ENCODE measurements at regions of chr9 and their contacts with region 1.

Region 1: DNA sequence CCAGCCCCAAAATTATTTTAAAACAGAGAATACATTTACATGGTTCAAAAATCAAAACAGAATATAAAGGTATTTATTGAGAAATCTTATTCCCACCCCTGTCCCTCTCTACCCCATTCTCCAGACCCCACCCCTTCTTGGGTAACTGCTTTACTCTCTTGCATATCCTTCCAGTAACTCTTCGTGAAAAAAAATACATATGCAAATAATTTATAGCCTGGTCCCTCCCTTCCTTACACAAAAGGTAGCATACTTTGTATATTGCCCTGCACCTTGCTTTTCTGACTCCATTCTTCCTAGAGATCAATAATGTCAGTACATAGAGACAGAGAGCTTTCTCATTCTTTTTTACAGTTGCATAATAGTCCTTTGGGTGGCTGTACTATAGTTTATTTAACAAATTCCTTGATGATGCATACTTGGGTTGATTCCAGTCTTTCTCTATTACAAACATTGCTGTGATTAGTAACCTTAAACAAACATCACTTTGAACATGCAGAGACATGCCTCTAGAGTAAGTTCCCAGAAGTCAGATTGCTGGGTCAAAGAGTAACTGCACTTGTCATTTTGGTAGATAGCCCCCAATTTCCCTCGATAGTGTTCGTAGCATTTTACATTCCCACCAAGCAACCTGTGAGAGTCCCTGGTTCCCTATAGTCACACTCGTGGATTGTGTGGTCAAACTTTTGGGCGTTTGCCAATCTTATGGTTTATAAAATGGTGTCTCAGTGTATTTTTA is 47.8 kb downstream of the STOM start:
- H3K4me3 ChIP-seq: no peak overlapping the region
- H3K27ac ChIP-seq: no peak overlapping the region
- H3K4me1 ChIP-seq: no peaks in the 10 kb centered on the region
- CTCF ChIP-seq: no peak

Region 2: DNA sequence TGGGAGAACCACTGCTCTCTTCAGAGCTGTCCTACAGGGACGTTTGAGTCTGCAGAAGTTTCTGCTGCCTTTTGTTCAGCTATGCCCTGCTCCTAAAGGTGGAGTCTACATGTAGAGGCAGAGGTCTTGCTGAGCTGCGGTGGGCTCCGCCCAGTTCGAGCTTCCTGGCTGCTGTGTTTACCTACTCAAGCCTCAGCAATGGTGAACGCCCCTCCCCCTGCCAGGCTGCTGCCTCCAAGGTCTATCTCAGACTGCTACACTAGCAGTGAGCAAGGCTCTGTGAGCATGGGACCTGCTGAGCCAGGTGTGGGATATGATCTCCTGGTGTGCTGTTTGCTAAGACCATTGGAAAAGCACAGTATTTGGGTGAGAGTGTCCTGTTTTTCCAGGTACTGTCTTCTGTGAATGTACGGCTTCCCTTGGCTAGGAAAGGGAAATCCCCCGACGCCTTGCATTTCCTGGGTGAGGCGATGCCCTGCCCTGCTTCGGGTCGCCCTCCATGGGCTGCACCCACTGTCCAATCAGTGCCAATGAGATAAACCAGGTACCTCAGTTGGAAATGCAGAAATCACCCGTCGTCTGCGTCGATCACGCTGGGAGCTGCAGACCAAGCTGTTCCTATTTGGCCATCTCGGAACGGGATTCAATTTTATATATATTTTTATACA is 188.9 kb before region 1 on chr9:
- CTCF ChIA-PET with region 1: no interaction called
- POLR2A ChIA-PET with region 1: no interaction called
- H3K4me3 ChIP-seq: no peak overlapping the region
- H3K27ac ChIP-seq: no peak overlapping the region
- H3K4me1 ChIP-seq: no peaks in the 10 kb centered on the region
- CTCF ChIP-seq: no peak

Region 3: GRCh38 chr9:121222524-121223171 is 99.6 kb before region 1 on chr9:
- CTCF ChIA-PET with region 1: interaction called, 18 read pairs
- POLR2A ChIA-PET with region 1: no interaction called
- H3K4me3 ChIP-seq: no peak overlapping the region
- H3K27ac ChIP-seq: no peak overlapping the region
- H3K4me1 ChIP-seq: peaks cover 3% of the 10 kb centered on the region; the same call in 1 of the 2 replicates
- CTCF ChIP-seq: no peak

Region 4: GRCh38 chr9:121286973-121287741 is 35.0 kb before region 1 on chr9:
- CTCF ChIA-PET with region 1: interaction called, 42 read pairs
- POLR2A ChIA-PET with region 1: interaction called, 3 read pairs
- H3K4me3 ChIP-seq: peak overlapping the region; percentile 19
- H3K27ac ChIP-seq: peak overlapping the region; percentile 91
- H3K4me1 ChIP-seq: peaks cover 8% of the 10 kb centered on the region; the same call in 1 of the 2 replicates
- CTCF ChIP-seq: peak; percentile 18; the same call in 1 of the 2 replicates

Region 5: GRCh38 chr9:121350993-121351561 is 28.9 kb after region 1 on chr9:
- CTCF ChIA-PET with region 1: interaction called, 25 read pairs
- POLR2A ChIA-PET with region 1: no interaction called
- H3K4me3 ChIP-seq: no peak overlapping the region
- H3K27ac ChIP-seq: no peak overlapping the region
- H3K4me1 ChIP-seq: no peaks in the 10 kb centered on the region; the same call in 1 of the 2 replicates
- CTCF ChIP-seq: no peak

Region 6: DNA sequence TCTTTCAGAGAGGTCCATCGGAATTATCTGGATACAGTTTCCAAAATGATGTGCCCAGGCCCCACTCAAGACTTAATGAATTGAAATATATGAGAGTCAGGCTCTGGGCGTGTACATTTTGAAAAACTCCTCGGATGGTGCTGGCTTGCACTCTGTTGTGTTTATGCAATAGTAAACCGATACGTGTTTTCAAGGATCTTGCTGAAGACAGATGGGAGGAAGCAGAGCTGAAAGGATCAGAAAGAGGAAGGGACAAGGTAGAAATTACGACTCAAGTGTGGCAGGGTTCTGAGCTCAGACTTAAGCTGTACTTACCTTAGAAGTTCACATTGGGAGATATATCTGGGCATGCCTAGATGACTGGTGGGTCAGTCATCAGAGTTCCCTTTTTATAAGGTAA is 61.5 kb after region 1 on chr9:
- CTCF ChIA-PET with region 1: interaction called, 110 read pairs
- POLR2A ChIA-PET with region 1: no interaction called
- H3K4me3 ChIP-seq: no peak overlapping the region
- H3K27ac ChIP-seq: no peak overlapping the region
- H3K4me1 ChIP-seq: no peaks in the 10 kb centered on the region
- CTCF ChIP-seq: no peak

Region 7: DNA sequence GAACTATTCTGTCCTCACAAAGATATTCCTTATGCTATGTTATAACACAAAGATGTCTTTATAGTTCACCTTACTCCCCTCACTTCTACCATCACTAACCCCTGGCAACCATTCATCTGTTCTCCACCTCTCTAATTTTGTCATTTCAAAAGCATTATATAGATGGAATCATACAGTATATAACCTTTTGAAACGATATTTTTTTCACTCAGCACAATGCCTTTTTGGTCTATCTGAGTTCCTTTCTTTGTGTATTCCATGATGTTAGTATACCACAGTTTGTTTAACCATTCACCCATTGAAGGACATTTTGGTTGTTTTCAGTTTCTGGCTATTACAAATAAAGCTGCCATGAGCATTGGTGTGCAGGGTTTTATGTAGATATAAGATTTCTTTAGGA is 83.7 kb after region 1 on chr9:
- CTCF ChIA-PET with region 1: interaction called, 236 read pairs
- POLR2A ChIA-PET with region 1: interaction called, 3 read pairs
- H3K4me3 ChIP-seq: no peak overlapping the region
- H3K27ac ChIP-seq: no peak overlapping the region
- H3K4me1 ChIP-seq: no peaks in the 10 kb centered on the region
- CTCF ChIP-seq: no peak